Mammary epithelial cell (primary cell): ENCODE measurements at regions of chr2 and their contacts with region 1.

Region 1: DNA sequence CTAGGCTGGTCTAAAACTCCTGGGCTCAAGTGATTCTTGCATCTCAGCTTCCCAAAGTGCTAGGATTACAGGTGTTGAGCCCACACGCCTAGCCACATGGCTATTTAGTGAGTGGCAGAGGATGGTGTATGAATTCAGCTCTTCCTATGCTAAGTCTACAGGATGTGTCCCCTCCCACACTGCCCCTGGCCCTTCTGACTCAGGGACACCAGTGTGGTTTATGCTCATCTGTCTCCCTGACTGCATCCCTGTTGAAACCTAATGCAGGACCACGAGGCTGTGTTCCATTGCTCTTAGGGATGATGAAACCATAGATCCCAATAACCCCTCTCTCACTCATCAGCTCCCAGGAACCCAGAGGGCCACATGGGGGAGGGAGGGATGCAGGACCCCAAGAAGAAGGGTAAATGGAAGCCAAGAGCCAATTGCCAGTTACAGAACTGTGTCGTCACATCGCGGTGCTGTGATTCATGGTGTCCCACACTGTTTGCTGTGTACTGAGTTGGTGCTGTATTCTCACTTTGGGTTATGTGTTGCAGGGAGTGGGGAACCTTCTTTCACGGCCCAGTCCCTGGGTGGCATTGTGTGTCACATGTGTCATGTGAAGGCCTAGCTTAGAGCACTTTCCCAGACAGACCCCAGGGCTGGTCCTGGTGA is 102.9 kb upstream of the HAAO start:
- DNase-seq: no peak
- H3K4me3 ChIP-seq: no peak overlapping the region
- H3K27ac ChIP-seq: no peak overlapping the region
- H3K4me1 ChIP-seq: peaks cover 6% of the 10 kb centered on the region
- H3K27me3 ChIP-seq: no peaks in the 10 kb centered on the region
- CTCF ChIP-seq: no peak

Region 2: DNA sequence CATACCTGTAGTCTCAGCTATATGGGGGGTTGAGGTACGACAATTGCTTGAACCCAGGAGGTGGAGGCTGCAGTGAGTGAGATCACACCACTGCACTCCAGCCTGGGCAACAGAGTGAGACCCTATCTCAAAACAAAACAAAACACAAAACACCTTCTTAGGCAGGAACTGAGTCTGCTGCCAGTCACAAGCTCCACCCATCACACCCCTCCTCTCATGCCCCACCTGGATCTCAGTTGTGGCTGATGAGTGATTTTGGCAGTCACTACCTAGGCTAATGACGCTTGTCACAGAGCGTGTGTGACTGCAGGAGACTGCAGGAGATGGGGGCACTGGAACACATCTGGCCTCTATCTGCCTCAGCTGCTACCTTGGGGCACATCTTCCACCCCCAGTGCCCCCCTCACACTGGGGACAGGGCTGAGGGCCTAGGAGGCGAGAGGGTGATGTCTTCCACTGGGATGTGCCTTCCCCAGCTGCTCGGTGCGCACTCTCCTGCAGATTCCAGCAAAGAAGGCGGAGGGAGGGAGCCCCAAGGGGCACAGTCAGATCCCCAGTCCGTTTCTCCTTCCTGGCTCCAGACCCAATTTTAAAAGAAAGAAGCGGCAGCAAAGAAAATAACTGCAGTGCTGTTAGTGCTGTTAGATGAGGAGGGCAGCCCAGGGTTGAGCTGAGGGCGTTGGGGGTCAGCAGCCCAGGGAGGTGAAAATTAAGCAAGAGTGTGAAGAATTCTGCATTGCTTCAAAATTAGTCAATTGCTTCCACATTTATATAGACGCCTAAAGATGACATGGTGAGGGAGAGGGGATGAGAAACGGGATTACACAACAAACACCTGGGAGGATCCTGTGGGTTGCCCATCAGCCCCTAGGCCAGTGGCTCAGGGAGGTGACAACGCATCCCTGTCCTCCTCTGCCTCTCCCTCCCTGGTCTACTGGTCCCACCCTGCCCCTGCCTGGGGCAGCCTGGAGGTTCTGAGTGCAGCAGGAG is 40.7 kb after region 1 on chr2:
- CTCF ChIA-PET with region 1: no interaction called
- dilution Hi-C with region 1: loop called (anchors 5 kb)
- in situ Hi-C with region 1: no loop called
- intact Hi-C with region 1: loop called (anchors 5 kb)
- DNase-seq: no peak
- H3K4me3 ChIP-seq: no peak overlapping the region
- H3K27ac ChIP-seq: no peak overlapping the region
- H3K4me1 ChIP-seq: peaks cover 45% of the 10 kb centered on the region
- H3K27me3 ChIP-seq: no peaks in the 10 kb centered on the region
- CTCF ChIP-seq: no peak

Region 3: DNA sequence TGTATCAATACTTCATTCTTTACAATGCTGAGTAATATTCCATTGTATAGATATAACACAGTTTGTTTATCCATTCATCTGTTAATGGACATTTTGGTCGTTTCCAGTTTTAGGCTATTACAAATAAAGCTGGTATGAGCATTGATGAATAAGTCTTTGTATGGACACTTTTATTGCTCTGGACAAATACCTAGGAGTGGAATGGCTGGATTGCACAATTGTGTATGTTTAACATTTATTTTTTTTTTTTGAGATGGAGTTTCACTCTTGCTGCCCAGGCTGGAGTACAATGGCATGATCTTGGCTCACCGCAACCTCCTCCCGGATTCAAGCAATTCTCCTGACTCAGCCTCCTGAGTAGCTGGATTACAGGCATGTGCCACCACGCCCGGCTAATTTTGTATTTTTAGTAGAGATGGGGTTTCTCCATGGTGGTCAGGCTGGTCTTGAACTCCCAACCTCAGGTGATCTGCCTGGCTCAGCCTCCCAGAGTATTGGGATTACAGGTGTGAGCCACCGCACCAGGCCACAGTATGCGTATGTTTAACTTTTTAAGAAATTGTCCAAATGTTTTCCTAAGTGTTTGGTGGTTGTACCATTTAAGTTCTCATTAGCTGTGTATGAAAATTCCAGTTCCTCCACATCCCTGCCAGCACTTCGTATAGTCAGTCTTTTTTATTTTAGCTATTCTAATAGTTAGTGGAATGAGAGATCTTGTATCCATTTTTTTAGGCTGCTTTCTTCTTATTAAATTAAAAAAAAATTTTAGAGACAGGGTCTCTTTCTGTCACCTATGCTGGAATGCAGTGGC is 92.1 kb after region 1 on chr2:
- CTCF ChIA-PET with region 1: no interaction called
- dilution Hi-C with region 1: no loop called
- in situ Hi-C with region 1: no loop called
- intact Hi-C with region 1: no loop called
- DNase-seq: peak; percentile 97
- H3K4me3 ChIP-seq: no peak overlapping the region
- H3K27ac ChIP-seq: peak overlapping the region; percentile 98
- H3K4me1 ChIP-seq: peaks cover 34% of the 10 kb centered on the region
- H3K27me3 ChIP-seq: no peaks in the 10 kb centered on the region
- CTCF ChIP-seq: no peak